Activated CD4-positive, alpha-beta memory T cell treated with anti-CD3 and anti-CD28 coated beads for 36 hours (primary cell): ENCODE measurements at regions of chr20 and their contacts with region 1.

Region 1: GRCh38 chr20:50516180-50516934 is 6.2 kb downstream of the PTPN1 start:
- DNase-seq: no peak
- H3K4me3 Mint-ChIP-seq: peak overlapping the region; percentile 67
- H3K27ac Mint-ChIP-seq: peak overlapping the region; percentile 98
- H3K4me1 Mint-ChIP-seq: peaks cover 88% of the 10 kb centered on the region
- H3K27me3 Mint-ChIP-seq: no peaks in the 10 kb centered on the region

Region 2: GRCh38 chr20:50110141-50110925 is 406.0 kb before region 1 on chr20:
- CTCF ChIA-PET with region 1: no interaction called
- POLR2A ChIA-PET with region 1: no interaction called
- intact Hi-C with region 1: loop called (anchors 2 kb)
- DNase-seq: peak; percentile 81
- H3K4me3 Mint-ChIP-seq: peak overlapping the region; percentile 95
- H3K27ac Mint-ChIP-seq: peak overlapping the region; percentile 95
- H3K4me1 Mint-ChIP-seq: peaks cover 81% of the 10 kb centered on the region
- H3K27me3 Mint-ChIP-seq: no peaks in the 10 kb centered on the region

Region 3: DNA sequence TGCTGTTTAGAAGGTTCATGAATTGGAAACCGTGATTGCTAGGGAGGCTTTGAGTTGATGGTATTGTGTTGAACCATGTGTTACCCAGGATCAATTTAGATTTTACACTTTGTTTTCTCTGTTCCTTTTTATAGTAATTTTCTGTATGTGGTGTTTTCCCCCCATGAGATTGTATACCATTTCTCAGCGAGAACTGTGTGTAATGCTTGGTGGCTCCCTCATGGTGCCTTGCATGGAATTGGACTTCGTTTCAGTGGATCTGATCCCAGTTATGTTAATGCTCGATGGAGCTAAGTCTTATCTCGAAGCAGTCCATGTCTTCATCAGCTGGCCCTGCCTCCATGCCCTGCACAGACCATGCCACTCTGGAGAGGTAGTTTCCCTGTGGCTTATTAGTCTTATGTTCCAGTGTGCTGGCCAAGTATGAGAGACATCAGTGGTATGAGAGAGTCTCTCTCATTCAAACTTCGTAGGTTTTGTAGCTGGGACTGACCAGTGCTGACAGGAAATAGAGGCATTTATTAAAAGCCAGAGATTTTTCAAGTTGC is 12.5 kb after region 1 on chr20:
- CTCF ChIA-PET with region 1: interaction called, 4 read pairs
- POLR2A ChIA-PET with region 1: interaction called, 6 read pairs
- intact Hi-C with region 1: loop called (anchors 1 kb)
- DNase-seq: no peak
- H3K4me3 Mint-ChIP-seq: no peak overlapping the region
- H3K27ac Mint-ChIP-seq: peak overlapping the region; percentile 83
- H3K4me1 Mint-ChIP-seq: peaks cover 49% of the 10 kb centered on the region
- H3K27me3 Mint-ChIP-seq: no peaks in the 10 kb centered on the region

Region 4: GRCh38 chr20:50561379-50562078 is 45.2 kb after region 1 on chr20:
- CTCF ChIA-PET with region 1: interaction called, 9 read pairs
- POLR2A ChIA-PET with region 1: interaction called, 21 read pairs
- intact Hi-C with region 1: loop called (anchors 1 kb)
- DNase-seq: peak; percentile 86
- H3K4me3 Mint-ChIP-seq: peak overlapping the region; percentile 82
- H3K27ac Mint-ChIP-seq: peak overlapping the region; percentile 97
- H3K4me1 Mint-ChIP-seq: peaks cover 88% of the 10 kb centered on the region
- H3K27me3 Mint-ChIP-seq: no peaks in the 10 kb centered on the region

Region 5: DNA sequence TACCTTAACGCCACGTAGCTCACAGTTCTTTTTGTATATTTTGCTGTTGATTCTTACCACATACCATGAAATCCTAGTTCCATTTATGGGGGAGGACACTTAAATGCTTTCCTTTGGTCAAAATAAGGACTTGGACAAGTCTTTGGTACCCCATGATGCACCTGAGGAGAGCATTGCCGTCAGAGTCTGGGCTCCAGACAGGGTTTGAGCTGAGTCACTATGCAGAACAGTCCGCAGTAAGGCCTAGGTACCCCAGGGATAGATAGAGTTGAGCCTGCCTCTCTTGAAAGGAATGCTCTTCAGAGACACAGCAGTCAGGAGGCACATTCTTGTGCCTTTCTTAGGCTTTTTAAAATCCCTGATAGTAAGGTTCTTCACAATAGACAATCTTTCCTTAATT is 221.0 kb after region 1 on chr20:
- CTCF ChIA-PET with region 1: no interaction called
- POLR2A ChIA-PET with region 1: no interaction called
- intact Hi-C with region 1: no loop called
- DNase-seq: no peak
- H3K4me3 Mint-ChIP-seq: no peak overlapping the region
- H3K27ac Mint-ChIP-seq: no peak overlapping the region
- H3K4me1 Mint-ChIP-seq: peaks cover 29% of the 10 kb centered on the region
- H3K27me3 Mint-ChIP-seq: no peaks in the 10 kb centered on the region

Region 6: GRCh38 chr20:51059862-51060261 is 543.5 kb after region 1 on chr20:
- CTCF ChIA-PET with region 1: no interaction called
- POLR2A ChIA-PET with region 1: no interaction called
- intact Hi-C with region 1: loop called (anchors 5 kb)
- DNase-seq: peak; percentile 17
- H3K4me3 Mint-ChIP-seq: no peak overlapping the region
- H3K27ac Mint-ChIP-seq: no peak overlapping the region
- H3K4me1 Mint-ChIP-seq: peaks cover 48% of the 10 kb centered on the region
- H3K27me3 Mint-ChIP-seq: peaks cover 27% of the 10 kb centered on the region